A549 (cell line): ENCODE measurements at regions of chr16 and their contacts with region 1.

Region 1: DNA sequence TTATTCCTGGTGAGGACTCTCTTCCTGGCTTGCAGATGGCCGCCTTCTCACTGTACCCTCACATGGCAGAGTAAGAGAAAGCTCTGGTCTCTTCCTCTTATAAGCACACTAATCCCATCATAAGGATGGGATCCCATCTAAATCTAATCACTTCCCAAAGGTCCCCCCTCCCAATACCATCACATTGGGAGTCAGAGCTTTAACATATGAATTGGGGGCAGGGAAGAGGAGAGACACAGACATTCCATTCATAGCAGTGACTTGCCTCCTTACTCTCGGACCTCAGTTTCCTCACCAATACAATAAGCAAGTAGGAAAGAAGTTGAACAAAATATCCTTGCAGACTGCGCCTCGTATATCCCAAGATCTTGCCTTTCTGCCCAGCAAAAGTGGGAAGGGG is 1.7 kb downstream of the CLEC19A start:
- DNase-seq: no peak
- ATAC-seq: no peak
- H3K4me3 ChIP-seq: no peak overlapping the region
- H3K27ac ChIP-seq: no peak overlapping the region
- H3K4me1 ChIP-seq: peaks cover 38% of the 10 kb centered on the region
- CTCF ChIP-seq: no peak
- EP300 ChIP-seq: no peak
- POLR2A ChIP-seq: no peak
- RAD21 ChIP-seq: no peak

Region 2: DNA sequence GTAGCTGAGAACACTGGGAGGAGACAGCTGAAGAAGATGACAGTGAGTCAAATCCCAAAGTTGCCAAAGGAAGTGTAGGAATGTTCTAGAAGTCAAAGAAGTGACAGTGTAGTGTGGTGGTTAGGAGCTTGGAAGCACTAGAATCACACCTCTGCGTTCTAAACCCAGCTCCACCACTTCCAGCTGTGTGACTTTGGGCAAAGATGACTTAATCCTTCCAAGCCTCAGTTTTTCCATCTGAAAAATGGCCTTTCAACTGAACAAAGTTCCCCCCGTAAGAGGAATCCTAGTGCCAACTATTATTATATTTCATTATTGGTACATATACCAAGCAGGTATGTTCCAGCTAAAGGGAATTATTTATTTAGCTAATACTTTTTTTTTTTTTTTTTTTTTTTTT is 486.8 kb after region 1 on chr16:
- CTCF ChIA-PET with region 1: no interaction called
- POLR2A ChIA-PET with region 1: interaction called, 16 read pairs
- DNase-seq: no peak
- ATAC-seq: no peak
- H3K4me3 ChIP-seq: no peak overlapping the region
- H3K27ac ChIP-seq: no peak overlapping the region
- H3K4me1 ChIP-seq: peaks cover 4% of the 10 kb centered on the region; the same call in 1 of the 3 replicates
- CTCF ChIP-seq: no peak
- EP300 ChIP-seq: no peak
- POLR2A ChIP-seq: no peak
- RAD21 ChIP-seq: no peak

Region 3: DNA sequence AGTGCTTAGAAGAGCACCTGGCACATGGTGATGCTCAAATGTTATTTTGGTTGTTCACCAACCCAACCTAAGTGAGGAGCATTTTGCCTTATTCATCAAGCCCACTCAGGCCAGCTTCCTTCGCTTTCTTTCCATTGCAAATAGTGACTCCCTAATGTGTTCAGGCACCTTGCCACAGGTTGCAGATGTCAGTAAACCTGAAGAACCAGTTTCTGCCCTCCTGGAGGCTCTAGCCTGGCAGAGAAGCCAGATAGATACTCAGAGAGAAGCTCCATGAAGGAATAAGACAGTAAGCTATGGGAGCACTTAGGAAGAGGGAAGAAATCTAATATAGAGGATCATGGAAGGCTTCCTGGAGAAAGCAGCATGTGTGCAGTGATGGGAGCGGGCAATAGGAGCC is 762.6 kb after region 1 on chr16:
- CTCF ChIA-PET with region 1: no interaction called
- POLR2A ChIA-PET with region 1: no interaction called
- DNase-seq: no peak
- ATAC-seq: no peak
- H3K4me3 ChIP-seq: no peak overlapping the region
- H3K27ac ChIP-seq: no peak overlapping the region
- H3K4me1 ChIP-seq: no peaks in the 10 kb centered on the region
- CTCF ChIP-seq: no peak
- EP300 ChIP-seq: no peak
- POLR2A ChIP-seq: no peak
- RAD21 ChIP-seq: no peak